ENCODE measurements at regions of chr1 and their contacts with region 1.

Region 1: DNA sequence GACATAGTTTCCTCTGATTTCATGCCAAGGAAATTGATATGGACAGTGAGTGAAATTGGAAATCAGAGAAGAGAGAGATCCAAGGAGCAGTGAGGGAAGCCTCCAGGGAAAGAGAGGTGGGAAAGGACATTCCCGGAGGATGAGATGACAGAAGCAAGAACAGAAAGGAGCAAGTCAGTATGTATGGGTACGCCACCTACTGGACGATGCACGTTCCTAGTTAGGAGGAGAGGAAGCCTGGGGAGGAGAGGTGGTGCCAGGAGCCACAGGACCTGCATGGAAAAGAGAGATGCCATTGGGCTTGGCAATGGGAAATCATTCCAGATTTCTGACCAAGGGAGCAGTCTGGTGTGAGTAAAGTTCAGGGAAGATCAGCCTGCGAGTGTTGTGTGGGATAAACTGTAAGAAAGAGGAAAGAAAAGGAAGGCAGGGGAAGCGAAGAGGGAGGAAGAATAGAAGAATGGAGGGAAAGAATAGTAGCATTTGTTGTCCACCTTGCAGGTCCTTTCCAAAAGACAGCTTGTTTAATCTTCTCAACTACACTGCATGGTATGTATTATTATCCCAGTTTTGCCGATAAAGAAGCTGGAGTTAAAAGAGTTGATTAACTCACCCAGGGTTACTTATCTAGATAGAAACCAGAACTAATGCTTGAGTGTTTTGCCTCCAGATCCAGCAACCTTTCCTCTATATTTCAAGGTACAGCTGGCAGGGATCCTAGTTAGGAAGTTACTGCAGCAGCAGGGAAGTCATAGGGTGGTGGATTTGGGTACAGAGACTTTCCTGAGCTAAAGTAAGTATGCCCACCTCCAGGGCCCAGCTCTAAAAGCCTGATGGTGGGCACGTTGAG is 27.4 kb downstream of the C1orf116 start:
- DNase-seq: peak in 1 of 2 experiments; percentile 69
- H3K4me3 ChIP-seq: no peak overlapping the region
- H3K27ac ChIP-seq: no peak overlapping the region
- H3K4me1 ChIP-seq: 0 out of 7 replicates have a peak, but pooled peaks cover 0 to 2% (median 0%) of the 10 kb centered on the region in 4 experiments
- H3K27me3 ChIP-seq: no peaks in the 10 kb centered on the region; a peak in 1 of 7 replicates
- CTCF ChIP-seq: peak; percentile 71 to 95 (median 83)
- EP300 ChIP-seq: no peak
- POLR2A ChIP-seq: no peak
- RAD21 ChIP-seq: peak; percentile 50 to 63

Region 2: GRCh38 chr1:206946261-206946660 is 58.9 kb before region 1 on chr1 and contains the start of gene PIGR:
- CTCF ChIA-PET with region 1: no interaction called
- POLR2A ChIA-PET with region 1: no interaction called
- DNase-seq: no peak
- H3K4me3 ChIP-seq: no peak within 1 kb of the TSS
- H3K27ac ChIP-seq: no peak within 1 kb of the TSS
- H3K4me1 ChIP-seq: no peaks in the 10 kb centered on the region; a peak in 1 of 7 replicates
- H3K27me3 ChIP-seq: no peaks in the 10 kb centered on the region
- CTCF ChIP-seq: no peak
- EP300 ChIP-seq: no peak
- POLR2A ChIP-seq: no peak
- RAD21 ChIP-seq: no peak
- total RNA-seq, gene PIGR: not detected in 2 replicates

Region 3: GRCh38 chr1:207015791-207016190 is 10.6 kb after region 1 on chr1:
- CTCF ChIA-PET with region 1: interaction called, 122 read pairs
- POLR2A ChIA-PET with region 1: no interaction called
- DNase-seq: no peak
- H3K4me3 ChIP-seq: no peak overlapping the region
- H3K27ac ChIP-seq: no peak overlapping the region
- H3K4me1 ChIP-seq: no peaks in the 10 kb centered on the region
- H3K27me3 ChIP-seq: no peaks in the 10 kb centered on the region
- CTCF ChIP-seq: no peak
- EP300 ChIP-seq: no peak
- POLR2A ChIP-seq: no peak
- RAD21 ChIP-seq: no peak

Region 4: GRCh38 chr1:207025144-207025880 is 20.1 kb after region 1 on chr1:
- CTCF ChIA-PET with region 1: interaction called, 122 read pairs
- POLR2A ChIA-PET with region 1: no interaction called
- DNase-seq: peak in 1 of 2 experiments; percentile 55
- H3K4me3 ChIP-seq: peak overlapping the region in 2 of 4 experiments; percentile 17 to 26; a peak in 3 of 8 replicates
- H3K27ac ChIP-seq: no peak overlapping the region
- H3K4me1 ChIP-seq: peaks cover 3 to 11% (median 9%) of the 10 kb centered on the region in 4 experiments; a peak in 6 of 7 replicates
- H3K27me3 ChIP-seq: no peaks in the 10 kb centered on the region
- CTCF ChIP-seq: no peak
- EP300 ChIP-seq: no peak
- POLR2A ChIP-seq: no peak
- RAD21 ChIP-seq: no peak

Region 5: DNA sequence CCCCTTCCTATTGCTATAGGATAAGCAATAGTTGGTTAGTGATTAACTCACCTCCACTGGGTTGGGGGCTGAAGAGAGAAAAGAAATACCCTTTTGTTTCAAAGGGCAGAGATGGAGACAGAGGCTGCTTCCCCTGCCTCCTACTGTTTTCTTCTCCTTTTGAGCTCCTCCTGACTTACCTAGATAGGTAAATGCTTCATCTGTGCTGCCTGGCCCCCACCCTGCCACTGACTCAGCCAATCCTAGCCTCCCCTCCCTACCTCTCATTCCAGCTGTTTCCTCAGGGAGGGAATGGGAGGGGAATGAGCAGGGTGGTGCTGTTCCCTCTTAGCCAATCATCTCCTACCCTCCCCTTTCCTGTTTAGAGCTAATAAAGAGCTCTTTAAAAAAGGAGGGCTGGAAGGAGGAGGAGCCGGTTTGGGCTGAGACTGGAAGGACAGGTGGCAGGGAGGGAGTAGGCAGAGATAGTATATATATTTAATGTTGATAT is 27.4 kb after region 1 on chr1 and contains the start of gene C1orf116:
- CTCF ChIA-PET with region 1: interaction called, 122 read pairs
- POLR2A ChIA-PET with region 1: no interaction called
- DNase-seq: peak; percentile 65 to 81
- H3K4me3 ChIP-seq: peak within 1 kb of the TSS; percentile 3 to 50 (median 29); a peak in 7 of 8 replicates
- H3K27ac ChIP-seq: peak within 1 kb of the TSS; percentile 55; the same call in 1 of the 2 replicates
- H3K4me1 ChIP-seq: peaks cover 4 to 17% (median 12%) of the 10 kb centered on the region in 4 experiments; a peak in 6 of 7 replicates
- H3K27me3 ChIP-seq: no peaks in the 10 kb centered on the region
- CTCF ChIP-seq: no peak
- EP300 ChIP-seq: no peak
- POLR2A ChIP-seq: peak in 1 of 2 experiments; percentile 55; a peak in 2 of 3 replicates
- RAD21 ChIP-seq: no peak
- total RNA-seq, gene C1orf116: 3.8 and 3.9 TPM in 2 replicates

Region 6: DNA sequence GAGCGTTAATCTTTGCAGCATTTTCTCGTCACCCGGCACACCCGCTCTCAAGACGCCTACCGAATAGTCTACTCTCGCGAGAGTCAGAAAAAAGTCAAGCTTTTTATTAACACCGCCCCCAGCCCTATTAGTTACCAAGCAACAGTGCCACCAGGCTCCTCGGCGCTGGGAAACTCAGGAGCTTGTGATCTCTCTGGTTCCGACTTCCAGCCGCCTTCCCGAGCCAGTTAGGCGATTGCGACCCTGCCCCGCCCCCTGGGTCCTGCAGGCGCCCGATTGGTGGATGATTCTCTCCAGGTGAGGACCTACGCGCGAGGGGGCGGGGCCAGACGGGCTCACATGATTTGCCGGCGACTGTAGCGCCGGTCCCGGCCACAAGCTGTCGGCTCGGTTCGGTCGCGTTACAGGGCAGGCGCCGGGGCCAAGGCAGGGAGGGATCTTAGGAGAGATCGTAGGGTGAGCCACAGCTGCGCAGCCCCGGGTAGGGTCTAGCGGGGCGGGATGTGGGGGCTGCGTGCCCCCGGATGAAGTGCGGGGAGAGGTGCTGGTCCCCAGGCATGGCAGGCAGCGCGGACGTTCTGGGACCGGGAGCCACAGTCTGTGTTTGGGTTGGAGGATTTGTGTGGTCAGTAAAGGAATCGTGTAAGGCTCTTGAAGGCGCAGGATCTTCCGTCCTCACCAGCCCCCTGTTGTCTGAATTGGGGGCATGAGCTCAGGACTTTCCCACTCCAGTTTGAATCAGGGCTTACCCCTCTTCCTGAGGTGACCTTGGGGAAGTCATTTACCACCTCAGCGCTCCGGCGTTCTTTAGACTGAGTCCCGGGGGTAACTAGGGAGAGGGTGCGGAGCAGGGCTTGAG is 47.9 kb after region 1 on chr1 and contains the start of gene PFKFB2:
- CTCF ChIA-PET with region 1: interaction called, 11 read pairs
- POLR2A ChIA-PET with region 1: no interaction called
- DNase-seq: peak; percentile 98 to 99
- H3K4me3 ChIP-seq: peak within 1 kb of the TSS; percentile 79 to 99 (median 96)
- H3K27ac ChIP-seq: peak within 1 kb of the TSS; percentile 90
- H3K4me1 ChIP-seq: peaks cover 0 to 8% (median 2%) of the 10 kb centered on the region in 4 experiments; a peak in 3 of 7 replicates
- H3K27me3 ChIP-seq: no peaks in the 10 kb centered on the region
- CTCF ChIP-seq: no peak
- EP300 ChIP-seq: no peak; a peak in 1 of 3 replicates
- POLR2A ChIP-seq: peak; percentile 88 to 93
- RAD21 ChIP-seq: peak in 1 of 2 experiments; percentile 1; a peak in 2 of 4 replicates
- total RNA-seq, gene PFKFB2: 17.8 and 19.1 TPM in 2 replicates